Sigmoid colon (tissue), 7 donors: ENCODE measurements at regions of chr1 and their contacts with region 1.

Region 1: GRCh38 chr1:5915587-5916571 is 76.3 kb downstream of the NPHP4 start:
- DNase-seq: no peak
- H3K4me3 ChIP-seq: no peak overlapping the region
- H3K27ac ChIP-seq: no peak overlapping the region
- H3K4me1 ChIP-seq: peaks cover 0 to 6% (median 0%) of the 10 kb centered on the region in 4 donors
- H3K27me3 ChIP-seq: no peaks in the 10 kb centered on the region
- CTCF ChIP-seq: peak in 3 of 4 experiments; percentile 25 to 57 (median 43)
- EP300 ChIP-seq: no peak
- POLR2A ChIP-seq: no peak

Region 2: DNA sequence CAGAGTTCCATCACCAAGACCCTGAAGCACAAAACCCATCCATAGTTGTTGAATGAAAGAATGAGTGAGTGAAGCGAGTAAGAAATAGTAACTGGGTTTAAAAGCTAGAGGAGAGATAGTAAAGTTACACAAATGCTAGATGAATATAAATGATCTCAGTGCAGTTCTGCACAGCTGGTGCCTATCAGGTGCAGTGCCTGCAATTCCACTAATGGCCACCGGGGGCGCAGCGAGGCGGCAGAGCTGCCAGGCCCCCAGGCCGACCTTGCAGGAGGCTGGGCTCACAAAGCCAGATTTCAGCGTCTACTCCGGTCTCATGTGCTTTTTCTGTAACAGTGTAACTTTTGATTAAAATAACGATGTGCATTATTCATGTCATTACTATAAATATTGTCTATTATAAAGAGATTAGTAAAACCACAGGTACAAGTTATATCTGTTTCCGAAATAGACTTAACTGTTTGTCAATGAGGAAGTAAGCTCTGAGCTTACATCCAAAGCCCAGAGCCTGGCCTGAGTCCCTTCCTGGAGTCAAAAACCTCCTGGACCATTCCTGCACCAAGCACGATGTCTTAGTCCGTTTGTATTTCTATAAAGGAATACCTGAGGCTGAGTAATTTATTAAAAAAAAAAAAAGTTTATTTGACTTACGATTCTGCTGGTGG is 401.2 kb before region 1 on chr1:
- intact Hi-C with region 1: loop called (anchors 10 kb)
- DNase-seq: no peak
- H3K4me3 ChIP-seq: no peak overlapping the region
- H3K27ac ChIP-seq: no peak overlapping the region
- H3K4me1 ChIP-seq: no peaks in the 10 kb centered on the region
- H3K27me3 ChIP-seq: peaks cover 0 to 35% (median 3%) of the 10 kb centered on the region in 3 donors
- CTCF ChIP-seq: peak; percentile 61 to 100 (median 90)
- EP300 ChIP-seq: no peak
- POLR2A ChIP-seq: no peak

Region 3: GRCh38 chr1:5975133-5975880 is 59.4 kb after region 1 on chr1:
- intact Hi-C with region 1: no loop called
- DNase-seq: peak; percentile 34
- H3K4me3 ChIP-seq: no peak overlapping the region
- H3K27ac ChIP-seq: no peak overlapping the region
- H3K4me1 ChIP-seq: no peaks in the 10 kb centered on the region
- H3K27me3 ChIP-seq: no peaks in the 10 kb centered on the region
- CTCF ChIP-seq: peak in 2 of 4 experiments; percentile 49 to 53
- EP300 ChIP-seq: no peak
- POLR2A ChIP-seq: no peak

Region 4: GRCh38 chr1:6001992-6002576 is 86.2 kb after region 1 on chr1:
- intact Hi-C with region 1: no loop called
- DNase-seq: peak; percentile 58
- H3K4me3 ChIP-seq: no peak overlapping the region
- H3K27ac ChIP-seq: no peak overlapping the region
- H3K4me1 ChIP-seq: no peaks in the 10 kb centered on the region
- H3K27me3 ChIP-seq: no peaks in the 10 kb centered on the region
- CTCF ChIP-seq: no peak
- EP300 ChIP-seq: no peak
- POLR2A ChIP-seq: no peak